A549 (cell line): ENCODE measurements at regions of chr10 and their contacts with region 1.

Region 1: DNA sequence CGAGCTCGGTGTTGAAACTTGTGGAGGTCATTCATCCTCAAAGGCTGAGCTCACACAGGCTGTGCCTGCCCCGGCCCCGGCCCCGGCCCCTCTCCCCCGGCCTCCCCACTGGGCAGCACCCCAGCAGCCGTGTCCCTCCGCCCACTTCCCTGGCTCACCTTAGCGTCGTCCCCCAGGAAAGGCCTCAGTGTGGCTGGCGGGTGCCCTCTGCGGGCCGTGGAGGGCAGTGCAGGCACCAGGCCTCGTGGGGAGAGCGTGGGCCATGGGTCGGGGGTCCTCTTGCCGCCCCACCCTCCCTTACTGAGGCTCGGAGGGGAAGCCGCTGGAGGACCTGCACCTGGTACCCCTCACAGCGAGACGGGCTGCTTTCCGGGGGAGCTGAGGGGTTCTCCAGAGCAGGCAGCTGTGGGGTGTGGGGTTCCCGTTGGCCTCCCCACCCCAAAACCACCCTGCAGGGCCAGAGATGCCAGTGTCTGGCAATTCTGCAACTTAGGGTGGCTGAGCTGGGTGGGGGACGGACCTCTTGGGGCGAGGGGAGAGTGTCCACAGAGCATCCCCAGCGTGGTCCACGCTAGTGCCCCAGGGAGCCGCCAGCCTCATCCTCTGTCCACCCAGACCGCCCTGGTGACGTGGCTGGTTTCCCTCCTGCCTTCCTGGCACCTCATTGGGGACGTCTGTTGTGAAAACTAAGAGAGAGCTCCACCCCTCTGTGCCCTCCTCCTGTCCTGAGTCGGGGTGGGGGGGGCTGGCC is 44.2 kb upstream of the DPYSL4 start:
- DNase-seq: peak; percentile 33 to 85
- ATAC-seq: peak; percentile 65 to 92
- H3K4me3 ChIP-seq: no peak overlapping the region
- H3K27ac ChIP-seq: peak overlapping the region in 1 of 2 experiments; percentile 50; a peak in 2 of 6 replicates
- H3K4me1 ChIP-seq: no peaks in the 10 kb centered on the region
- CTCF ChIP-seq: peak; percentile 82
- EP300 ChIP-seq: no peak
- POLR2A ChIP-seq: no peak
- RAD21 ChIP-seq: peak; percentile 83 to 96

Region 2: GRCh38 chr10:131519723-131520580 is 622.6 kb before region 1 on chr10:
- CTCF ChIA-PET with region 1: no interaction called
- POLR2A ChIA-PET with region 1: no interaction called
- DNase-seq: no peak
- ATAC-seq: no peak
- H3K4me3 ChIP-seq: no peak overlapping the region
- H3K27ac ChIP-seq: no peak overlapping the region
- H3K4me1 ChIP-seq: no peaks in the 10 kb centered on the region
- CTCF ChIP-seq: no peak
- EP300 ChIP-seq: no peak
- POLR2A ChIP-seq: no peak
- RAD21 ChIP-seq: no peak

Region 3: GRCh38 chr10:131885391-131886161 is 257.0 kb before region 1 on chr10:
- CTCF ChIA-PET with region 1: interaction called, 22 read pairs
- POLR2A ChIA-PET with region 1: no interaction called
- DNase-seq: peak; percentile 76 to 84
- ATAC-seq: peak; percentile 91 to 99
- H3K4me3 ChIP-seq: no peak overlapping the region
- H3K27ac ChIP-seq: no peak overlapping the region
- H3K4me1 ChIP-seq: peaks cover 5% of the 10 kb centered on the region; the same call in 1 of the 3 replicates
- CTCF ChIP-seq: peak; percentile 94
- EP300 ChIP-seq: no peak
- POLR2A ChIP-seq: no peak
- RAD21 ChIP-seq: peak; percentile 88 to 89

Region 4: GRCh38 chr10:132011024-132011423 is 131.6 kb before region 1 on chr10:
- CTCF ChIA-PET with region 1: interaction called, 13 read pairs
- POLR2A ChIA-PET with region 1: no interaction called
- DNase-seq: no peak
- ATAC-seq: no peak
- H3K4me3 ChIP-seq: no peak overlapping the region
- H3K27ac ChIP-seq: no peak overlapping the region
- H3K4me1 ChIP-seq: no peaks in the 10 kb centered on the region
- CTCF ChIP-seq: no peak
- EP300 ChIP-seq: no peak
- POLR2A ChIP-seq: no peak
- RAD21 ChIP-seq: no peak

Region 5: GRCh38 chr10:132030898-132031463 is 111.6 kb before region 1 on chr10:
- CTCF ChIA-PET with region 1: interaction called, 20 read pairs
- POLR2A ChIA-PET with region 1: no interaction called
- DNase-seq: no peak
- ATAC-seq: no peak
- H3K4me3 ChIP-seq: no peak overlapping the region
- H3K27ac ChIP-seq: no peak overlapping the region
- H3K4me1 ChIP-seq: peaks cover 5% of the 10 kb centered on the region; the same call in 1 of the 3 replicates
- CTCF ChIP-seq: no peak
- EP300 ChIP-seq: no peak
- POLR2A ChIP-seq: no peak
- RAD21 ChIP-seq: no peak

Region 6: DNA sequence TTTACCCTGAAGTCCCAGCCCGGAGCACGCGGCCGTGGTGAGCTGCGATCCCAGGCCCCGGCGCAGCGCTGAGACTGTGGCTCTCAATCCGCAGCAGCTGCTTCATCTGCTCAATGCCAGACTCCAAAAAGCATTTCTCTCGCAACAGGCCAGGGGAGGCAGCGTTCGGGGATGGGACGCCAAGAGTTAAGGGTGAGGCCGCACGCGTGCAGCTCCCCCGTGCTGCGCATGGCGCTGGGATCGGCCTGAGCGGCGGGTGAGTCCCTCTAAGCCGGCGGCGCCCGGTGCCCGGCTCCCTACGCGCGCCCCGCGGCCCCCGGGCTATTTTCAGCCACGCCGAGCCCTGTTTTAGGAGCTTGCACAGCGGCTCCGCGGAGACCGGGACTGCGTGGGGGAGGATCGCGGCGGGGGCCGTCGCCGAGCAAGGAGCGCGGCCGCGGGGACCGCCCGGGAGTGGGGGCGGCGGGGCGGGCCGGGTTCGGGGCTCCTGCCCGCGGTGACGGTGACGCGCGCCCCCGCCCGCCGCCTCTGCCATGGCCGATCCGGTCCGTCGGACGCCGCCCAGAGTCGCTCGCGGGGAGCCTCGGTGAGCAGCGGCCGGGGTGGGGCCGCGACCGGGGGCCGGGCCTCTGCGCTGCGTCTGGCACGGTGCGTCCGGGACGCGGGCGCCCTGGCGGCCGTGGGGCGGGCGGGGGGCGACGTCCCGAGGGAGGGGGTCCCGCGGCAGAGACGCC is 106.3 kb before region 1 on chr10:
- CTCF ChIA-PET with region 1: interaction called, 25 read pairs
- POLR2A ChIA-PET with region 1: no interaction called
- DNase-seq: peak; percentile 52 to 57
- ATAC-seq: peak; percentile 71 to 79
- H3K4me3 ChIP-seq: peak overlapping the region; percentile 82
- H3K27ac ChIP-seq: peak overlapping the region; percentile 87 to 91
- H3K4me1 ChIP-seq: 0 out of 3 replicates have a peak, but pooled peaks cover 3% of the 10 kb centered on the region
- CTCF ChIP-seq: no peak
- EP300 ChIP-seq: no peak
- POLR2A ChIP-seq: no peak
- RAD21 ChIP-seq: no peak

Region 7: DNA sequence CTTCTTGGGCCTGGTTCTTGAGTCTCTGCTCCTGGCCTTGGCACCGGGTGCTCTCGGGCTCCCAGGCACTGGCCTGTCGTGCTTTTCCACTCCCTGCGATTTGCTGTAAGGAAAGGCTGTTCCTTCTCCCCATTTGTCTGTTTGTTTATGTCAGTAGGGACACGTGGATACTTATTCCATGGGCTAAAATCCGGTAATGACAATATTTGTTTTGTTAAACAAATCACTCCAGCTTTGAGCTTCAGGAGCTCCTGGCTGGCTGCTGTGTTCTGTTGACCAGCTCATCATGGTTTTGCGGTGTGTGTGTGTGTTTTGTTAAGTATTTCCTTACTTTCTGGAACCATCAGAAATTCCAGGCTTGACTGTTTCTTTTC is 94.3 kb before region 1 on chr10:
- CTCF ChIA-PET with region 1: interaction called, 10 read pairs
- POLR2A ChIA-PET with region 1: no interaction called
- DNase-seq: peak in 1 of 2 experiments; percentile 33
- ATAC-seq: peak; percentile 12 to 18; a peak in 2 of 6 replicates
- H3K4me3 ChIP-seq: no peak overlapping the region
- H3K27ac ChIP-seq: no peak overlapping the region
- H3K4me1 ChIP-seq: no peaks in the 10 kb centered on the region
- CTCF ChIP-seq: no peak
- EP300 ChIP-seq: no peak
- POLR2A ChIP-seq: no peak
- RAD21 ChIP-seq: no peak

Region 8: DNA sequence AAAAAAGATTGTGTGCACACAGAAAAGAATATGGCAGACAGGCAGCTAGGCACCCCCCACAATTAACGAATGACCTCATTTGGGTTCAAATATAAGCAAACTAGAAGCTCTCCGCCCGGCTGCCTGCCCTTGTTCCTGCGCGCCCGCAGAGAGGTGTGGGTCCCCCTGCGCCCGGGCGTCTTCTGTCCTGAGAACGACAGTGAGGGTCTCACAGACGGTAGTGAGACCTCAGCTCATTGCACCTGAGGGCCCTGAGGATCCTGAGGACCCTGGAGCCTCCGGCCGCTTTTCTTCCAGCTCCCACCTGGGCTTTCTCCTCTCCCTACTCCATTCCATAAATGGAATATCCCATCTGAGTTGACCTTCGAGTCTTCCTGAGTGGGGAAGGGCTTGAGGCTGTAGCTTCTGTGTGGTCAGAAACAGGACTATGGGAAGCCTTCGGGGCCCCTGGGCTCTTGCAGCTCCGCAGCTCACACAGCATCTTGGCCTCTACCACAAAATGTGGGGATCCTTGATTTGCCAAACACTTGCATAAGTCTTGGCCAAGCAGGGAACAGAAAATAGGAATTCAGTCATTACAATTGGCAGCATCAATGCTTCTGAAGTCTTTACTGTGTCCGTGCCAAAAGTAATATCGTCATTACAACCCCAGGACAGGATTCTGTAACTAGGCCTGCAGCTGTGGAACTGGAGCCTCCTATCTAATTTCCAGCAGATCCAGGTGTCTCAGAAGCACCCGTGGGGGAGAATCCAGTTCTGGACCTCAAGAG is 33.1 kb before region 1 on chr10:
- CTCF ChIA-PET with region 1: interaction called, 14 read pairs
- POLR2A ChIA-PET with region 1: no interaction called
- DNase-seq: no peak
- ATAC-seq: no peak
- H3K4me3 ChIP-seq: no peak overlapping the region
- H3K27ac ChIP-seq: no peak overlapping the region
- H3K4me1 ChIP-seq: no peaks in the 10 kb centered on the region
- CTCF ChIP-seq: no peak
- EP300 ChIP-seq: no peak
- POLR2A ChIP-seq: no peak
- RAD21 ChIP-seq: no peak

Region 9: GRCh38 chr10:132223156-132223590 is 80.6 kb after region 1 on chr10:
- CTCF ChIA-PET with region 1: no interaction called
- POLR2A ChIA-PET with region 1: no interaction called
- DNase-seq: peak; percentile 85
- ATAC-seq: peak; percentile 92 to 99
- H3K4me3 ChIP-seq: no peak overlapping the region
- H3K27ac ChIP-seq: peak overlapping the region; percentile 30 to 80; a peak in 3 of 6 replicates
- H3K4me1 ChIP-seq: peaks cover 6% of the 10 kb centered on the region; the same call in 2 of the 3 replicates
- CTCF ChIP-seq: peak; percentile 97
- EP300 ChIP-seq: no peak
- POLR2A ChIP-seq: no peak
- RAD21 ChIP-seq: peak; percentile 97 to 98